Esophagus muscularis mucosa (tissue), 4 donors: ENCODE measurements at regions of chr5 and their contacts with region 1.

Region 1: GRCh38 chr5:181223058-181223728 is at the start of gene TRIM41:
- DNase-seq: peak; percentile 99
- H3K4me3 ChIP-seq: peak within 1 kb of the TSS; percentile 72 to 83 (median 74)
- H3K27ac ChIP-seq: peak within 1 kb of the TSS; percentile 92 to 95 (median 94)
- H3K4me1 ChIP-seq: peaks cover 15 to 40% (median 36%) of the 10 kb centered on the region in 4 donors
- H3K27me3 ChIP-seq: no peaks in the 10 kb centered on the region
- CTCF ChIP-seq: peak in 1 of 3 experiments; percentile 35
- EP300 ChIP-seq: no peak
- POLR2A ChIP-seq: peak; percentile 95
- total RNA-seq, gene TRIM41: 9.8 to 22.4 (median 18.2) TPM

Region 2: DNA sequence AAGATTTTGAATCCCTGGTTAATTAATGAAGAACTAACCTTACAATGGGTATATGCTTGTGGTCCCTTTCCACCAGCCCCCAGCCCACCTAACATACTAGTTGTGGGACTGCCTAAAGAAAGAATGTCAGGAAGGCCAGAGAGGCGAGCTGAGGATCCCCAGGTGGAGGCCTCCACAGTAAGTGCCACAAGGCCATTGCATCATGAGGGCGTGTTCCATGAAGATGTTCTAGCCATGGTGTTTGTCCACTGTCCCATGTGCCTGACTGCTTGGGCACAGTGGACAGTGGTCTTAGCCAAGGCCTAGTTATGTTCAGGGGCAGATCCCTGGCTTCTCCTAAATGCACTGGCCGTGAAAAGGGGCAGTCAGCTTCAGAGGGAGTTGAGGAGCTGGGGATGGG is 383.3 kb before region 1 on chr5:
- intact Hi-C with region 1: no loop called
- DNase-seq: no peak
- H3K4me3 ChIP-seq: no peak overlapping the region
- H3K27ac ChIP-seq: no peak overlapping the region
- H3K4me1 ChIP-seq: no peaks in the 10 kb centered on the region
- H3K27me3 ChIP-seq: no peaks in the 10 kb centered on the region
- CTCF ChIP-seq: no peak
- EP300 ChIP-seq: no peak
- POLR2A ChIP-seq: no peak

Region 3: DNA sequence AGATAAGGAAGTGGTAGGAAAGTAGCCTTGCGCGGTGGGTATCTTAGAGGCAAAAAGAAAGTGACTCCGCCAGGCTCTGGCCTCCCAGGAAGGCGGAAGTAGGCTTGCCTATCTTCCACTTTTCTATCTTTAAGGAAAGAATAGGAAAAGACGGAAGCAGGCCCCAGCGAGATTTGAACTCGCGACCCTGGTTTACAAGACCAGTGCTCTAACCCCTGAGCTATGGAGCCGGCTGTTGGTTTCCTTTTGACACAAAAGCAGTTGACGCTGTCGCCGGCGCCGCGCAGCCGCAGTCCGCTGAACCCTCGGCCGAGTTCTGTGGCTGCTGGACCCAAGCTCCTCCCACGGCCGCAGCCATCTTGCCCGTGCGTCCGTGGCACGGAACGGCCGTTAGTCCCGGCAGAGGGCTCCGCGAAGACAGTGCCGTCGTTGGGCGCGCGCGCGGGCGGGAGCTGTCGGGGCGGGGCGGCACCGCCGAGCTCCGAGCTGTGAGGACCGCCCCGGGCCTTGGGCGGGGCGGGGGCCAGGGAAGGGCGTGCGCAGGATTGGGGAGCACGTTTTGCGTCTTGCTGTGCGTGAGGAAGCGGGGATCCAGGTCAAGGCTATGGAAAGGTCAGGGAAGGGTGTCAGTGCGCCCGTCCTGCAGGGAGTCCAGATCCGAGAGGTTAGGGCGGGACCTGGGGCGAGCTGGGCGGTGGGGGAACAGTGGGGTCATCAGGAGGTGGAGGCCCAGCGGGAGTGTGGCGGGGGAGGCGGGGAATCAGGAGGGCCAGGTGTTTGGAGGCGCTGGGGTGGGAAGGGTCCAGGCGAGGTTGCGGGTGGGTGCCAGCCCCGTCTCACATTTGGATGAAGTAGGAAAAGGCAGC is 31.4 kb before region 1 on chr5:
- intact Hi-C with region 1: loop called (anchors 1 kb)
- DNase-seq: peak; percentile 100
- H3K4me3 ChIP-seq: peak overlapping the region; percentile 76 to 84 (median 78)
- H3K27ac ChIP-seq: peak overlapping the region; percentile 87 to 95 (median 92)
- H3K4me1 ChIP-seq: peaks cover 11 to 49% (median 43%) of the 10 kb centered on the region in 4 donors
- H3K27me3 ChIP-seq: no peaks in the 10 kb centered on the region
- CTCF ChIP-seq: no peak
- EP300 ChIP-seq: no peak
- POLR2A ChIP-seq: peak; percentile 36

Region 4: GRCh38 chr5:181243512-181244343 is 20.5 kb after region 1 on chr5 and contains the start of gene RACK1:
- intact Hi-C with region 1: loop called (anchors 1 kb)
- DNase-seq: peak; percentile 98
- H3K4me3 ChIP-seq: peak within 1 kb of the TSS; percentile 73 to 81 (median 74)
- H3K27ac ChIP-seq: peak within 1 kb of the TSS; percentile 92 to 97 (median 94)
- H3K4me1 ChIP-seq: peaks cover 50 to 83% (median 75%) of the 10 kb centered on the region in 4 donors
- H3K27me3 ChIP-seq: no peaks in the 10 kb centered on the region
- CTCF ChIP-seq: no peak
- EP300 ChIP-seq: no peak
- POLR2A ChIP-seq: peak; percentile 90
- total RNA-seq, gene RACK1: 1,252 to 1,898 (median 1,625) TPM

Region 5: DNA sequence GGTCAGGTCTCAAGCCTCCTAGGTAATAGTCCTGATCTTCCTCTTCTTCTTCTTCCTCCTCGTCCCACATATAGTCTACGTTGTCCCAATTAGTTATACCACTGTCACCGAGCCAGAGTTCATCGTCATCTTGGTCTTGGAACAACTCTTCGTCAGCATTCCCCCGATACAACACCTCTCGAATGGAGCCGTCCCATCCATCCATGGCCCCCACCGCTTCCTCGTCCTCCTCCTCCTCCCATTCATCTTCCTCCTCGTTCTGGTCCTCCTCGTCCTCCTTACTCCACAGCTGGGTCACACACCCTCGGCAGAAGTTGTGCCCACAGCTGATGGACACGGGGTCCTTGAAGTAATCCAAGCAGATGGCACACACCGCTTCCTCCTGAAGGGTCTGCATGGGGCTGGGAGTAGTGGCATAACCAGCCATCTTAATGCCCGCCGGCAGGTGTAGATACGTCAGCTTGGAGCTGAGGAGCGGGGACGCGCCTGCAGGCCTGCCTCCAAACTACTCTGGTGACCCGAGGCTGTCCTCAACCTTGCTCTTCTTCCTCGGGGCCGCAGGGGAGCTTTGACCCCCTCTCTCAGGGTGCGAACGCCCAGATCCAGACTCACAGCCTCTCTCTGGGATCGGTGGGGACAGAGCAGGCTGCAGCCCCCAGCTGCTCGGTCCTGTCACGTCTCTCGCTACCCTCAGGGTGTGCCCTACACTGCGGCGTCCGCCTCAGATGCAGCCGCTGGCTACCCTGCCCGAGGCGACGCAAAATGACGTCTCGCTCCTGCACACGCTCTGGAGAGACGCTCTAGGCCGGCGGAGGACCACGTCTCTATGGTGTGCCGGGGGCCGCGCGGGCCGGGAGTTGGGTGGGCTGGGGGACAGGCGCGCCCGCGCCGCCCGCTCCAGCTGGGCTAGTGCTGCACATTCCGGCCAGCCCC is 37.5 kb after region 1 on chr5 and contains the start of gene TRIM52:
- intact Hi-C with region 1: loop called (anchors 5 kb)
- DNase-seq: peak; percentile 97
- H3K4me3 ChIP-seq: peak within 1 kb of the TSS; percentile 79 to 95 (median 86)
- H3K27ac ChIP-seq: peak within 1 kb of the TSS; percentile 96 to 100 (median 98)
- H3K4me1 ChIP-seq: peaks cover 52 to 61% (median 55%) of the 10 kb centered on the region in 4 donors
- H3K27me3 ChIP-seq: no peaks in the 10 kb centered on the region
- CTCF ChIP-seq: no peak
- EP300 ChIP-seq: no peak
- POLR2A ChIP-seq: peak; percentile 86
- total RNA-seq, gene TRIM52: 10.3 to 21.9 (median 18.4) TPM